CD8-positive, alpha-beta T cell (primary cell): ENCODE measurements at regions of chr9 and their contacts with region 1.

Region 1: DNA sequence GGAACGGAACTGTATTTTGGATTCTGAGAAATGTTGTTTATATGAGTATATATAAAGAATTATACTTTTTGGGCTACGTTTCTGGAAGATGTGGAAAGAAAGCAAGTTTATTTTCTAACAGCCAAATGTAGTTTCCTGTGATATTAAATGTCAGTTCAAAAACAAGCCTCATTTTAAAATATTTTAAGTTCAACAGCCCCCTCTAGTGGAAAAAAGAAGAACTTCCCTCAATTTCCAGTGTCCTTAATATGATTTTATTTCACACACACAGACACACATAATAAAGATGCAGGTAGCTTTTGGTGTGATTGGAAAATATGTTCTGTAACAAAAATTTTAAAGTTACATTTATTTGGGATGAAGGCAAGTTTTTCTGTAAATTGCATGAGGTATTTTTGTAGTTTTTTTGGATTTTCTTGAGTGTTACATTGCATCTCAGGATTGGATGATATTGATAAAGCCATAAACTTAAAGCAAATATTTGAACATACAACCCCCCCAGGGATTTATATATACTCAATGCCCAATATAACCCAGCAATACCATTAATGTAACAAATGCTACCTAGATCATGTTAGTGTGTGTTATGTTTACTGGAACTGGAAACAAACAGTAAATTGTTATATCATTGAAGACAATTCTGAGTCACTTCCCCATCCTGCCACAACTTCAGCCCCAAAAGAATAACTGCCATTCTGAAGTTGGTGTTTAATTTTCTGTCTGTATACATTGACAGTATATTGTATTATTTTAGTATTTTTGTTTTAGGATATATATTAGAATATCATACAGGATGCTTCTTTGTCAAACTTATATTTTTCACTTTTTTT is 54.0 kb downstream of the CCDC171 start:
- DNase-seq: peak in 3 of 9 experiments; percentile 18 to 62 (median 52)
- ATAC-seq: no peak
- H3K4me3 ChIP-seq: no peak overlapping the region
- H3K4me3 Mint-ChIP-seq: no peak overlapping the region
- H3K27ac ChIP-seq: no peak overlapping the region
- H3K27ac Mint-ChIP-seq: no peak overlapping the region
- H3K4me1 ChIP-seq: no peaks in the 10 kb centered on the region
- H3K4me1 Mint-ChIP-seq: peaks cover 2% of the 10 kb centered on the region
- H3K27me3 ChIP-seq: no peaks in the 10 kb centered on the region
- H3K27me3 Mint-ChIP-seq: no peaks in the 10 kb centered on the region
- CTCF ChIP-seq: peak; percentile 89

Region 2: DNA sequence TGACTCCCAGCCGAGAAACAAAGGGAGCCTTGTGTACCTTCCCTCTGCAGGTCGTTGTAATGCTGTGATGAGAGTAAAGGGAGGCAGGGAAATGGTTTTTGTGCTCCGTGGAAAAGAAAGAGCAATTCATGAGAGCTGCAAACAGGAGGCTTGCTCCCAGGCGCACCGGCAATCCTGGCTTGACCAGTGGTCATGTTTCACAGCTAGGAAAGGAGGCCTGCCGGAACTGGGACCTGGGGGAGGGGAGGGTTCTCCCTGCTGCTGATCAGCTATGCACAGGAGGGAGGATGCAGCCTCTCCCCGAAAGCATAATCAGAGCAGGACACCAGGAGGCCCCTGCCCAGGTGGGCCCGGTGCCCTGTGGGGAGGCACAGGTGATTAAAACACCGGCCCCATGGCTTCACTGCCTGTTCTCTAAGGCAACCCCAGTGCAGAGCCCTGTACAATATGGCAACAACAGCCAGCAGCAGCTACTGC is 1044.9 kb before region 1 on chr9:
- CTCF ChIA-PET with region 1: no interaction called
- POLR2A ChIA-PET with region 1: no interaction called
- intact Hi-C with region 1: no loop called
- DNase-seq: no peak
- ATAC-seq: no peak
- H3K4me3 ChIP-seq: no peak overlapping the region
- H3K4me3 Mint-ChIP-seq: no peak overlapping the region
- H3K27ac ChIP-seq: no peak overlapping the region
- H3K27ac Mint-ChIP-seq: no peak overlapping the region
- H3K4me1 ChIP-seq: no peaks in the 10 kb centered on the region
- H3K4me1 Mint-ChIP-seq: no peaks in the 10 kb centered on the region
- H3K27me3 ChIP-seq: no peaks in the 10 kb centered on the region
- H3K27me3 Mint-ChIP-seq: peaks cover 3% of the 10 kb centered on the region
- CTCF ChIP-seq: no peak

Region 3: GRCh38 chr9:15211160-15211814 is 395.6 kb before region 1 on chr9:
- CTCF ChIA-PET with region 1: interaction called, 12 read pairs
- POLR2A ChIA-PET with region 1: no interaction called
- intact Hi-C with region 1: loop called (anchors 1 to 2 kb)
- DNase-seq: peak; percentile 21 to 75 (median 56)
- ATAC-seq: peak; percentile 56
- H3K4me3 ChIP-seq: no peak overlapping the region
- H3K4me3 Mint-ChIP-seq: no peak overlapping the region
- H3K27ac ChIP-seq: no peak overlapping the region
- H3K27ac Mint-ChIP-seq: no peak overlapping the region
- H3K4me1 ChIP-seq: no peaks in the 10 kb centered on the region
- H3K4me1 Mint-ChIP-seq: peaks cover 4% of the 10 kb centered on the region
- H3K27me3 ChIP-seq: no peaks in the 10 kb centered on the region
- H3K27me3 Mint-ChIP-seq: no peaks in the 10 kb centered on the region
- CTCF ChIP-seq: peak; percentile 90

Region 4: DNA sequence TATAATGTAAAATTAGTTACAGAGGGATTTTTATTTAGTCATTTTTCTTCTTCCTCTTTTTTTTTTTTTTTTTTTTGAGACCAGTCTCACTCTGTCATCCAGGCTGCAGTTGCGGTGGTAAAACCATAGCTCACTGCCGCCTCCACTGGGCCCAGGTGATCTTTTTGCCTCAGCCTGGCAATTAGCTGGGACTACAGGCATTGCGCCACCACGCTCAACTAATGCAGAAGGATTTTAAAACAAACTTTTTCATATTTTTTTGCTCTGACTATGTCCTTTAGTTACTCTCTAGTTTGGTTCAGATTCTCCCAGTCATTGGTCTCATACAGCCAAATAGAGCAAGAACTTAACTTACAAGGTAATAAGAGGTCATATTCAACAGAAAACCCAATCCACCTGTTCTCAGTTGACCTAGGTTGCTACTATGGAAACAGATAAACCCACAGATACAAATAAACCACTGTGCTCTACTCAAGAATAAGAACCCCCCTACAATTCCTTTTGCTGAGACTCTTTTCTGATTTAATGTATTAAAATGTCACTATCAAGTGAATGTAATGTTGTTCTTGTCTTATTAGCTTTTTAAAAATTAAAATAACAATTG is 249.7 kb before region 1 on chr9:
- CTCF ChIA-PET with region 1: interaction called, 9 read pairs
- POLR2A ChIA-PET with region 1: no interaction called
- intact Hi-C with region 1: loop called (anchors 1 to 2 kb)
- DNase-seq: peak in 7 of 9 experiments; percentile 13 to 74 (median 30)
- ATAC-seq: peak; percentile 44
- H3K4me3 ChIP-seq: no peak overlapping the region
- H3K4me3 Mint-ChIP-seq: no peak overlapping the region
- H3K27ac ChIP-seq: no peak overlapping the region
- H3K27ac Mint-ChIP-seq: no peak overlapping the region
- H3K4me1 ChIP-seq: peaks cover 19% of the 10 kb centered on the region
- H3K4me1 Mint-ChIP-seq: peaks cover 20% of the 10 kb centered on the region
- H3K27me3 ChIP-seq: no peaks in the 10 kb centered on the region
- H3K27me3 Mint-ChIP-seq: no peaks in the 10 kb centered on the region
- CTCF ChIP-seq: no peak

Region 5: GRCh38 chr9:15485836-15486666 is 120.8 kb before region 1 on chr9:
- CTCF ChIA-PET with region 1: interaction called, 4 read pairs
- POLR2A ChIA-PET with region 1: no interaction called
- intact Hi-C with region 1: loop called (anchors 1 to 5 kb)
- DNase-seq: peak in 2 of 9 experiments; percentile 31 to 51
- ATAC-seq: no peak
- H3K4me3 ChIP-seq: no peak overlapping the region
- H3K4me3 Mint-ChIP-seq: no peak overlapping the region
- H3K27ac ChIP-seq: no peak overlapping the region
- H3K27ac Mint-ChIP-seq: no peak overlapping the region
- H3K4me1 ChIP-seq: no peaks in the 10 kb centered on the region
- H3K4me1 Mint-ChIP-seq: peaks cover 48% of the 10 kb centered on the region
- H3K27me3 ChIP-seq: no peaks in the 10 kb centered on the region
- H3K27me3 Mint-ChIP-seq: no peaks in the 10 kb centered on the region
- CTCF ChIP-seq: peak; percentile 61

Region 6: DNA sequence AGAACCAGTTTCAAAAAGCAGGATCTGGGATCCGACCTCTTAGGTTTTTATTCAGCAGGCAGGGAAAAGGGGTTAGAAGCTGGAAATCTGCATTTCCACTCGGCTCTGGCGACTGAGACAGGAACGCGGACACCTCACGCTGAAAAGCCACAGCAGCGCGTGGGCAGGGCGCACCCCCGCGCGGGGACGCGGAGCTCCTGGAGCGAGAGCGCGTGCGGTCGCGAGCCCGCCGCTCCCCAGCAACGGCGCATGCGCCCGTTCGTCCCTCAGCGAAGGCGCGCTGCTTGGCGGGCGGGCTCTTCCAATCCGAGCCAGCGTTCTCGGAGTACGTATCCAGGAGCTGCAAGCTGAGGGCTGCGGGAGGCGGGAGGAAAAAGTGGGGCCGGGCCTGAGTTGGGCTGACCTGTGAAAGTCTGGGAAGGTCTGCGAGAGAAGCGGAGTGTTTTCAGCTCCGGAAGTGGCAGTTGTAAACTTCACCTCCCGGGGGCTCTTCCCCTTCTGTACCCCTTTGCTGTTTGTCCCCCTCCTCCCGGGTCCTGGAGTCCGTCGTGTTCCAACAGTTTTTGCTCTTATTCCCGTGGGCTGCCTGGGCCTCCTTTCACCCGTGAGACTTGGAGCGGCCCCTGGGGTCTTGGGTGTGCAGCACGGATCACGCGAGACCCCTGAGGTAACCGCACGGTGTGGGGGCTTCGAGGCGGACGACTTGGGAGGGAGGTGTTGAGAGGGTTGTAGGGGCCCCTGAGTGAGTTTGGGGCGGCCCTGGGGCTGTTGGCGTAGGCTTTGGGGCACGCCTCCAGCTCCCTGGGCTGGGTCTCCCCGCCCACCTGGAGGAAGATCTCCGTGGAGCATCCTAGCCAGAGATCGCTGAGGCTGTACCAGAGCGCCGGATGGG is 54.0 kb before region 1 on chr9 and contains the start of gene CCDC171:
- CTCF ChIA-PET with region 1: interaction called, 8 read pairs
- POLR2A ChIA-PET with region 1: interaction called, 6 read pairs
- intact Hi-C with region 1: loop called (anchors 1 to 5 kb)
- DNase-seq: peak; percentile 67 to 96 (median 84)
- ATAC-seq: peak; percentile 79
- H3K4me3 ChIP-seq: peak within 1 kb of the TSS; percentile 88 to 98
- H3K4me3 Mint-ChIP-seq: peak within 1 kb of the TSS; percentile 95
- H3K27ac ChIP-seq: peak within 1 kb of the TSS; percentile 54 to 75
- H3K27ac Mint-ChIP-seq: peak within 1 kb of the TSS; percentile 82
- H3K4me1 ChIP-seq: no peaks in the 10 kb centered on the region
- H3K4me1 Mint-ChIP-seq: peaks cover 9% of the 10 kb centered on the region
- H3K27me3 ChIP-seq: no peaks in the 10 kb centered on the region
- H3K27me3 Mint-ChIP-seq: no peaks in the 10 kb centered on the region
- CTCF ChIP-seq: no peak
- total RNA-seq, gene CCDC171: 1.1 to 1.7 TPM

Region 7: DNA sequence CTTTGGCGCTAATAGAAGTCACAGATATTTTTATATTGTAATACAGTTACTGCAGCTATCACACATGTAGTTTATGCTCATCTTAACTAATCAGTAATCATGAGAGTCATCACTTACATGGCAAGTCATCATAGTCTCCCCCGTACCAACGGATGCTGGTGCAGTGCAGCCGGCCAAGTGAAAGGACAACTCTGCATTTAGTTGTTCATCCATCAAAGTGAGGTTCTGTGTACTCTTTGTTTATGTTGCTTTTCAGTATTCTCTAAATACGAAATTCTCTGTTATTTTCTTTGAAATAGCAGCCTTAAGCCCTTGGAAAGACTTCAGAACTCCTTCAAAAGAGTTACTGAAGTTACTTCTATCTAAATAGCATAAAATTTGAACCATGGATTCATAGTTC is 162.7 kb after region 1 on chr9:
- CTCF ChIA-PET with region 1: no interaction called
- POLR2A ChIA-PET with region 1: no interaction called
- intact Hi-C with region 1: no loop called
- DNase-seq: no peak
- ATAC-seq: no peak
- H3K4me3 ChIP-seq: no peak overlapping the region
- H3K4me3 Mint-ChIP-seq: no peak overlapping the region
- H3K27ac ChIP-seq: no peak overlapping the region
- H3K27ac Mint-ChIP-seq: no peak overlapping the region
- H3K4me1 ChIP-seq: no peaks in the 10 kb centered on the region
- H3K4me1 Mint-ChIP-seq: no peaks in the 10 kb centered on the region
- H3K27me3 ChIP-seq: no peaks in the 10 kb centered on the region
- H3K27me3 Mint-ChIP-seq: no peaks in the 10 kb centered on the region
- CTCF ChIP-seq: no peak